ENCODE measurements at regions of chr5 and their contacts with region 1.

Region 1: DNA sequence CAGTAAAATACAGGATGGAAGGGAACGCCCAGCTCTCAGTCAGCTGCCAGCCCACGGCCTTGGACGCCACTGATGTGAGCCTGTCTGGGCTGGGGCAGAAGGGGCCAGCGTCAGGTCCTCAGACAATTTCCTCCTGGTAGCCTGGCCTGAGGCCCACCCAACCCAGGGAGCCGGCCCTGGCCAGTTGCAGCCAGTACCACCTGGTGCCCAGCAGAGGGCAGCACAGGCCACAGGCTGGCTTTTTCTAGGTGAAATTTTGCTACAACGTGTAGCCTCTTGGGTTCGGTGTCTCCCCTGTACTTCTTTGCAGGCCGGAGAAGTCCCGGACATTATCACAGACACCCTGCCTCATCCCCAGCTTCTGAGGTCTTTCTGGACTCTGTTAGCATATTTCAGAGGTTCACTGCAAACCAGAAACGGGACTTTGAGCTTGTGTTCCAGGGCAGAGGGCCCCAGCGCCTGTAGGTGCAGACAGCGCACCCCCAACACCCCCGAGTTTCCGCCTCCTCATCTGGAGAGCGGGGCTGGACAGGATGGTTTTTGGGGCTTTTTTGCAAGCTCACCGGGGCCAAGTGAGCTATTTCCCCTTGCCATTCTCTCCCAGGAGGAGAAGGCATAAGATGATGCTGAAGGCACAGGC is 45.9 kb upstream of the KCNMB1 start:
- DNase-seq: peak; percentile 48 to 53
- ATAC-seq: peak; percentile 83 to 95
- H3K4me3 ChIP-seq: no peak overlapping the region
- H3K27ac ChIP-seq: no peak overlapping the region
- H3K4me1 ChIP-seq: no peaks in the 10 kb centered on the region
- CTCF ChIP-seq: peak; percentile 92
- EP300 ChIP-seq: no peak
- POLR2A ChIP-seq: no peak
- RAD21 ChIP-seq: peak; percentile 97 to 98

Region 2: DNA sequence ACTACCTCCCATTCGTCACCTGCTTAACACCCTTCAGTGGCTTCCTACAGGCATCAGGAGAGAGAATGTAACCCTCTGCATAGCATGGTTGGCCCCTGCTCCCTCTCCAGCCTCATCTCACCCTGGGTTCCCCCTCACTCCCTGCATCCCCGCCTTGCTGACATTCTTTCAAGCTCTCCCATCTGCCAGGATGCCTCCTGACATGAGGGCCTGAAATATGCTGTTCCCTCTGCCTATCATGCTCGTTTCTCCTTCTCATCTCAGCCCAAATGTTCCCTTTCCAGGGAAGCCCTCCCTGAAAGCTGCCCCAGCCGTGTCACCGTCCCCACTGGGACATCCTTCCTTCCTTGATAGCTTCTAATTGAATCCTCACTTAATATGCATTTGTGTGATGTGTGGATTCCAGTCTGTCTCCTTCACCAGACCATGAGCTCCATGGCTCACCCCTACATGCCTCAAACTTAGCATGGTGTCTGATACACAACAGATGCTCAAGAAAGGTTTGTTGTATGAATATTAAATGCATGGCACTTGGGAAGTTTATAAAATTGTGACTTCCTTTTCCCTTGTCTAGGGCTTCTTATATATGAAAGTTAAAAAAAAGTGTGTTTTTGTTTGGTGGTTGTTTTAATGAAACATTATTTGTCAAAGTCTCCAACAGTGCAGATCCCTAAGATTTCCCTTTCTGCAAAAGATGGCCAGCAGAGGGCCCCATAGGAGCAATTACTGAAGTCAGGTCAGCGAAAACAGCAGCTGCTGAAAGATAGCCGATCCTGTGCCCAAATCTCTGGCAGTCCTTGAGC is 209.6 kb before region 1 on chr5:
- CTCF ChIA-PET with region 1: interaction called, 22 read pairs
- POLR2A ChIA-PET with region 1: no interaction called
- DNase-seq: peak; percentile 66 to 68
- ATAC-seq: peak; percentile 82 to 96; a peak in 4 of 6 replicates
- H3K4me3 ChIP-seq: no peak overlapping the region
- H3K27ac ChIP-seq: no peak overlapping the region
- H3K4me1 ChIP-seq: peaks cover 1% of the 10 kb centered on the region
- CTCF ChIP-seq: peak; percentile 85
- EP300 ChIP-seq: no peak
- POLR2A ChIP-seq: no peak
- RAD21 ChIP-seq: peak; percentile 86 to 90

Region 3: DNA sequence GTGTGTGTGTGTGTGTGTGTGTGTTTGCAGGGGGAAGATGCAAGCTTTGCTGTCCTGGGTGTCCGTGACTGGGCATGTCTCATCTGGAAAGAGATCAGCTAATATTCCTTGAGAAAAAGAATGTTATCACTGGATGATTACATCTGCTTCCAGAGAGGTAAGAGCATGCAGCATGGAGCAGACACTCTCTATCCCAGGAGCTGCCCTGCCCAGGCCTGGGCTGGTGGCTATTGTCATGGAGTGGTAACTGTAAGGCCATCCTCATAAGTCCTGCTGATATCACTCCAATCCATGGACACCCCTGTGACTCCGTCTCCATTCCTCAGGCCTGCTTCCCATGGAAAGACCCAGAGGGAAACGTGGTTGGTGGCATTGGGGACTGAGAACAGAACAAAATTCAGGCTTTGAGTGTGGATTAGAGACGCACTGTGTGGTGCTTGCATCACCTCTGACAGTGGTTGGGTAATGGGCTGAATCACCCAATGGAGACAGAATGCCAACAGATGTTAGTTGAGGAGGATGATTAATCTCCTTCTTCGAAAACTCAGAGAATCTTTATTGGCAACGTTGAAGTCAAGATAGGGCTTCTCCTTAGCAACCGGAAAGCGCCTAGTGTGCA is 16.8 kb after region 1 on chr5:
- CTCF ChIA-PET with region 1: interaction called, 47 read pairs
- POLR2A ChIA-PET with region 1: no interaction called
- DNase-seq: peak; percentile 28 to 40
- ATAC-seq: peak; percentile 90 to 95
- H3K4me3 ChIP-seq: no peak overlapping the region
- H3K27ac ChIP-seq: peak overlapping the region in 1 of 2 experiments; percentile 70; a peak in 3 of 6 replicates
- H3K4me1 ChIP-seq: peaks cover 11% of the 10 kb centered on the region
- CTCF ChIP-seq: no peak
- EP300 ChIP-seq: no peak
- POLR2A ChIP-seq: no peak
- RAD21 ChIP-seq: no peak

Region 4: GRCh38 chr5:170571875-170572852 is 137.1 kb after region 1 on chr5:
- CTCF ChIA-PET with region 1: interaction called, 10 read pairs
- POLR2A ChIA-PET with region 1: no interaction called
- DNase-seq: peak in 1 of 2 experiments; percentile 3
- ATAC-seq: peak; percentile 49 to 62; a peak in 4 of 6 replicates
- H3K4me3 ChIP-seq: peak overlapping the region; percentile 10; the same call in 1 of the 3 replicates
- H3K27ac ChIP-seq: peak overlapping the region; percentile 16 to 52; a peak in 4 of 6 replicates
- H3K4me1 ChIP-seq: peaks cover 26% of the 10 kb centered on the region
- CTCF ChIP-seq: no peak
- EP300 ChIP-seq: no peak
- POLR2A ChIP-seq: no peak
- RAD21 ChIP-seq: no peak

Region 5: GRCh38 chr5:170603578-170604565 is 168.8 kb after region 1 on chr5:
- CTCF ChIA-PET with region 1: interaction called, 66 read pairs
- POLR2A ChIA-PET with region 1: no interaction called
- DNase-seq: peak; percentile 58 to 90
- ATAC-seq: peak; percentile 75 to 96; a peak in 5 of 6 replicates
- H3K4me3 ChIP-seq: no peak overlapping the region
- H3K27ac ChIP-seq: no peak overlapping the region
- H3K4me1 ChIP-seq: no peaks in the 10 kb centered on the region
- CTCF ChIP-seq: peak; percentile 57
- EP300 ChIP-seq: no peak
- POLR2A ChIP-seq: no peak
- RAD21 ChIP-seq: peak; percentile 55 to 84; a peak in 4 of 5 replicates